SK-N-SH (cell line): ENCODE measurements at regions of chr5 and their contacts with region 1.

Region 1: DNA sequence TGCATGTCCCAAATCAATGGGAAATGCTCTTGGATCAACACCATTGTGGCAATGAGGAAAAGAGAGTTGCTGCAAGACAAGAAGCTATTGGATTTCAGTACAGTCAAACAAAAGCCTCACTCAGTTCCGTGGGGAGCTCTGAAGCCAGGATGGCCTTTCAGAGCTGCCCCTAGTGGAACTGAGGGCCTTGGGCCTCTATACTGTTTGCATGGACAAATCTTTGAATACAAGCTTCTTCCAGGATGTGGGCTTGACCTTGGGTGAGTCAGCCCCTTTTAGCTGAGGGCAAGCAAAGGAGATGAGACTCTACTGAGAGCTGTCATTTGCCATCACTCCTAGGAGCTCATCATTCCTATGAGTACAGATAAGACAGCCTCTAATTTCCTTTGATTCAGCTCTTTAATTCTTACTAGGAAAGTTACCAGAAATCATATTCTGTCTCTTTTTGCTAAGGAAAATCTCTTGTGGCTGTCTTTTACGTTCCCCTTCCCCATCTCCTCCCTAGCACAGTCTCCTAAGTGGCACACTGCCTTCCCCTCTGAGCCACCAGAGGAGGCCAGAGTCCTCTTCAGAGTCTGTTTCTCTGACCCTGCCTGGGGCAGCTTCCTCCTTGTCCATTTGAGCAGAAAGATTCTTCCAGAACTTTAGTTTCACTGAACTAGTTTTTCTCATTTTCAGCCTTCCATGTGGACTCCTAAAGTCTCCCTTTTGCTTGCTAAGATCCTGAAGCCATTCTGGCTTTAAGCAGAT is 168.8 kb upstream of the POC5 start:
- DNase-seq: peak; percentile 17
- H3K4me3 ChIP-seq: no peak overlapping the region
- H3K27ac ChIP-seq: no peak overlapping the region
- H3K4me1 ChIP-seq: peaks cover 0 to 4% of the 10 kb centered on the region in 2 experiments; a peak in 2 of 4 replicates
- H3K27me3 ChIP-seq: no peaks in the 10 kb centered on the region
- CTCF ChIP-seq: 0 out of 2 replicates have a peak, but pooled peaks have one; percentile 19
- EP300 ChIP-seq: no peak
- RAD21 ChIP-seq: peak; percentile 80

Region 2: GRCh38 chr5:75909223-75909622 is 23.2 kb after region 1 on chr5:
- CTCF ChIA-PET with region 1: interaction called, 13 read pairs
- POLR2A ChIA-PET with region 1: no interaction called
- DNase-seq: peak; percentile 25
- H3K4me3 ChIP-seq: no peak overlapping the region
- H3K27ac ChIP-seq: peak overlapping the region in 1 of 2 experiments; percentile 86; a peak in 2 of 4 replicates
- H3K4me1 ChIP-seq: peaks cover 0 to 28% of the 10 kb centered on the region in 2 experiments; a peak in 2 of 4 replicates
- H3K27me3 ChIP-seq: no peaks in the 10 kb centered on the region
- CTCF ChIP-seq: no peak
- EP300 ChIP-seq: peak in 1 of 2 experiments; percentile 73; a peak in 2 of 4 replicates
- RAD21 ChIP-seq: no peak

Region 3: GRCh38 chr5:76082772-76083554 is 196.9 kb after region 1 on chr5 and contains the start of gene SV2C:
- CTCF ChIA-PET with region 1: interaction called, 15 read pairs
- POLR2A ChIA-PET with region 1: interaction called, 5 read pairs
- DNase-seq: peak; percentile 89
- H3K4me3 ChIP-seq: peak within 1 kb of the TSS; percentile 16 to 55; a peak in 3 of 4 replicates
- H3K27ac ChIP-seq: peak within 1 kb of the TSS in 1 of 2 experiments; percentile 98; a peak in 2 of 4 replicates
- H3K4me1 ChIP-seq: peaks cover 0 to 2% of the 10 kb centered on the region in 2 experiments; a peak in 2 of 4 replicates
- H3K27me3 ChIP-seq: peaks cover 28% of the 10 kb centered on the region
- CTCF ChIP-seq: no peak
- EP300 ChIP-seq: no peak
- RAD21 ChIP-seq: no peak
- polyA plus RNA-seq, gene SV2C: 0.05 and 0.13 TPM in 2 replicates

Region 4: DNA sequence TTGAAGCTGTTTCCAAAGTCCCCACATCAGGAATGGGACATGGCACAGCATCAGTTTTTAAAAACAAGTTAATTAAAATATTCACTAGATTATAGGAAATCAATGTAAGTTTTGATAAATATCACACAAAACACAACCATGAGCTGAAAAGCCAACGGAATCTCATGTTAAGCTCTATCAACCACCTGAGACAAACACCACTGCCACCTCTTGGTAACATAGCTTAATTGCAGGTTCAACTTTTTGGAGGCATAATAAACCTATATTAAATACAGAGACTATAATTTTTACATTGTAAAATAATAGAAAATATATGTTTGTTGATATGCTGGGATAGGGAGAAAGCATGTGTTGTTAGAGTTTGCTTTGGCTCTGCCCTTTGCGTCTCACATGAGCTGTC is 323.3 kb after region 1 on chr5:
- CTCF ChIA-PET with region 1: interaction called, 11 read pairs
- POLR2A ChIA-PET with region 1: no interaction called
- DNase-seq: no peak
- H3K4me3 ChIP-seq: no peak overlapping the region
- H3K27ac ChIP-seq: no peak overlapping the region
- H3K4me1 ChIP-seq: peaks cover 0 to 15% of the 10 kb centered on the region in 2 experiments; a peak in 1 of 4 replicates
- H3K27me3 ChIP-seq: no peaks in the 10 kb centered on the region; the same call in 1 of the 2 replicates
- CTCF ChIP-seq: peak; percentile 23; the same call in 1 of the 2 replicates
- EP300 ChIP-seq: no peak
- RAD21 ChIP-seq: peak; percentile 16; the same call in 1 of the 2 replicates